CD8-positive, alpha-beta T cell (primary cell): ENCODE measurements at regions of chr11 and their contacts with region 1.

Region 1: GRCh38 chr11:65850831-65851811 is 6.9 kb downstream of the CFL1 start:
- DNase-seq: peak in 3 of 9 experiments; percentile 20 to 48 (median 37)
- ATAC-seq: no peak
- H3K4me3 ChIP-seq: no peak overlapping the region
- H3K4me3 Mint-ChIP-seq: no peak overlapping the region
- H3K27ac ChIP-seq: no peak overlapping the region
- H3K27ac Mint-ChIP-seq: no peak overlapping the region
- H3K4me1 ChIP-seq: peaks cover 32% of the 10 kb centered on the region
- H3K4me1 Mint-ChIP-seq: peaks cover 29% of the 10 kb centered on the region
- H3K27me3 ChIP-seq: no peaks in the 10 kb centered on the region
- H3K27me3 Mint-ChIP-seq: no peaks in the 10 kb centered on the region
- CTCF ChIP-seq: no peak

Region 2: GRCh38 chr11:65833297-65834030 is 17.7 kb before region 1 on chr11 and contains the start of gene SNX32:
- CTCF ChIA-PET with region 1: interaction called, 6 read pairs
- POLR2A ChIA-PET with region 1: interaction called, 18 read pairs
- intact Hi-C with region 1: no loop called
- DNase-seq: peak; percentile 90 to 97 (median 94)
- ATAC-seq: peak; percentile 99
- H3K4me3 ChIP-seq: peak within 1 kb of the TSS; percentile 79 to 91
- H3K4me3 Mint-ChIP-seq: no peak within 1 kb of the TSS
- H3K27ac ChIP-seq: peak within 1 kb of the TSS; percentile 66 to 80
- H3K27ac Mint-ChIP-seq: peak within 1 kb of the TSS; percentile 64
- H3K4me1 ChIP-seq: peaks cover 17% of the 10 kb centered on the region
- H3K4me1 Mint-ChIP-seq: peaks cover 6% of the 10 kb centered on the region
- H3K27me3 ChIP-seq: peaks cover 0 to 3% of the 10 kb centered on the region in 2 experiments
- H3K27me3 Mint-ChIP-seq: no peaks in the 10 kb centered on the region
- CTCF ChIP-seq: no peak
- total RNA-seq, gene SNX32: 0.52 to 0.69 TPM

Region 3: GRCh38 chr11:66146017-66146416 is 294.9 kb after region 1 on chr11:
- CTCF ChIA-PET with region 1: no interaction called
- POLR2A ChIA-PET with region 1: no interaction called
- intact Hi-C with region 1: loop called in 1 of 2 experiments (anchors 5 kb)
- DNase-seq: no peak
- ATAC-seq: no peak
- H3K4me3 ChIP-seq: no peak overlapping the region
- H3K4me3 Mint-ChIP-seq: no peak overlapping the region
- H3K27ac ChIP-seq: no peak overlapping the region
- H3K27ac Mint-ChIP-seq: no peak overlapping the region
- H3K4me1 ChIP-seq: peaks cover 13% of the 10 kb centered on the region
- H3K4me1 Mint-ChIP-seq: peaks cover 52% of the 10 kb centered on the region
- H3K27me3 ChIP-seq: no peaks in the 10 kb centered on the region
- H3K27me3 Mint-ChIP-seq: no peaks in the 10 kb centered on the region
- CTCF ChIP-seq: no peak